ENCODE measurements at regions of chr10 and their contacts with region 1.

Region 1: GRCh38 chr10:32332299-32332750 is 14.6 kb downstream of the EPC1 start:
- DNase-seq: peak; percentile 13
- H3K4me3 Mint-ChIP-seq: no peak overlapping the region
- H3K27ac Mint-ChIP-seq: no peak overlapping the region
- H3K4me1 Mint-ChIP-seq: peaks cover 74% of the 10 kb centered on the region
- H3K27me3 Mint-ChIP-seq: no peaks in the 10 kb centered on the region
- CTCF ChIP-seq: no peak

Region 2: DNA sequence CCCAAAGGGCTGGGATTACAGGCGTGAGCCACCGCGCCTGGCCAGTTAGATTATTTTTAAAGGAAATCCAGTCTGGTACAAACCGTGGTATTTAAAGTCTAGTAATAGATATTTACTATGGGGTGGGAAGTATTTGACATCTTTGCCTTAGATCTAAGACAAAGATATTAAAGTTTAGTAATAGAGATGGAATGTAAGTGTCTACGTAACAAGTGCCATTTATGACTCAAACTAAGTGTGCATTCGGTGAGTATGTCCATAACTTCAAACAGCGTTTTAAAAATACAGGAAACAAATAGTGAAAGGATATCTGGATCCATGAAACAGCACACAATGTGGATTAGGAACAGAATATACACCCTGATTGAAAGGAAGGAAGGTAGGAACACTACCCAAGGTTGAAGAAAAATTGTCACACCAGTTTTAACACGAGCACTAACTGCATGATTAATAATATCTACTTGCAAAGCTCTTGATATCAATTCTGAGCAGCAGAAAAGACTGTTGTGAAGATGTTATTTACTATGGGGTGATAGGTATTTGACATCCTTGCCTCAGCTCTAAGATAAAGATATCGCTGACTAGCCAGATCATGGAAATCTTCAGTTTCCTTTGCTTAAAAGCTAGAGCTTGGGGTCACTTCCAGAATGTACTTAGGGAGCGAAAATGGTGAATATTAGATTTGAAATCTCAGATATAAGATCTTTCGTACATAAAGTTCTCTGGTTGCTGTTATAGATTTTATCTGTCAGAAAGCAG is 34.1 kb before region 1 on chr10:
- CTCF ChIA-PET with region 1: no interaction called
- intact Hi-C with region 1: loop called (anchors 5 kb)
- DNase-seq: no peak
- H3K4me3 Mint-ChIP-seq: peak overlapping the region; percentile 5
- H3K27ac Mint-ChIP-seq: peak overlapping the region; percentile 82
- H3K4me1 Mint-ChIP-seq: peaks cover 31% of the 10 kb centered on the region
- H3K27me3 Mint-ChIP-seq: no peaks in the 10 kb centered on the region
- CTCF ChIP-seq: no peak